Esophagus muscularis mucosa (tissue), 4 donors: ENCODE measurements at regions of chr12 and their contacts with region 1.

Region 1: DNA sequence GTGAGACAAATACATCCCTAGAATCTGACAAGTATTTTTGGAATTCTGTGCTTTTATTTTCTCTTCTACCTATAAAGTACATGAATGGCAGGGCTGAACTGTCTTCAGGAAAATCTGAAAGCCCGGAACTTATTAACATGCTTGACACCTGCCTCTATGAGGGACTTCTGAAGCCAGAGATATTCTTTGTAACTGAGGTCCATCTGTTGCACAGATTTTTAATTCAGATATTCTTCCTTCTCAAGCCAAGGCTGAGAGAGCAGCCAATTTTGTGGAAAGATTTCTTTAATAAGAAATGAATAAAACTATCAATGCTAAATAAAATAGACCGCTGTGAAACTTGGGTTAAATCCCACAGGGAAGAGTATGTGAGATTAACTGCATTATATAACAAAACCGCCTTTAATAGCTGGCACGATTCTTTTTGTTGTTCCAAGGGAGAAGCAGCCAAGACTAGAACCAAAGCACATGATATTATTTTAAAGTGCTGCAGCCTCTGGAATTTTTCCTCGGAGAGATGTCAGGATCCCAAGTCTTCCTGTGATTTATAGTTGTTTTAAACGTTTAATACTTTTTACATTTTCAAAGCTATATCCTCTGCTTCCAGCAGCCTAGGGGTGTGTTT is 148.9 kb downstream of the CRADD start:
- DNase-seq: no peak
- H3K4me3 ChIP-seq: peak overlapping the region in 3 of 4 donors; percentile 0 to 16 (median 11)
- H3K27ac ChIP-seq: peak overlapping the region; percentile 56 to 74 (median 68)
- H3K4me1 ChIP-seq: peaks cover 37 to 71% (median 51%) of the 10 kb centered on the region in 4 donors
- H3K27me3 ChIP-seq: no peaks in the 10 kb centered on the region
- CTCF ChIP-seq: no peak
- EP300 ChIP-seq: no peak
- POLR2A ChIP-seq: no peak

Region 2: GRCh38 chr12:93514853-93515252 is 311.2 kb before region 1 on chr12:
- intact Hi-C with region 1: no loop called
- DNase-seq: no peak
- H3K4me3 ChIP-seq: no peak overlapping the region
- H3K27ac ChIP-seq: no peak overlapping the region
- H3K4me1 ChIP-seq: peaks cover 0 to 5% (median 0%) of the 10 kb centered on the region in 4 donors
- H3K27me3 ChIP-seq: no peaks in the 10 kb centered on the region
- CTCF ChIP-seq: no peak
- EP300 ChIP-seq: no peak
- POLR2A ChIP-seq: no peak

Region 3: GRCh38 chr12:93778306-93778705 is 47.7 kb before region 1 on chr12:
- intact Hi-C with region 1: loop called (anchors 5 kb)
- DNase-seq: no peak
- H3K4me3 ChIP-seq: no peak overlapping the region
- H3K27ac ChIP-seq: peak overlapping the region; percentile 68 to 80 (median 78)
- H3K4me1 ChIP-seq: peaks cover 45 to 55% (median 51%) of the 10 kb centered on the region in 4 donors
- H3K27me3 ChIP-seq: no peaks in the 10 kb centered on the region
- CTCF ChIP-seq: no peak
- EP300 ChIP-seq: no peak
- POLR2A ChIP-seq: no peak

Region 4: GRCh38 chr12:93802698-93803423 is 23.2 kb before region 1 on chr12:
- intact Hi-C with region 1: no loop called
- DNase-seq: no peak
- H3K4me3 ChIP-seq: peak overlapping the region in 2 of 4 donors; percentile 5 to 7
- H3K27ac ChIP-seq: peak overlapping the region; percentile 75 to 80 (median 77)
- H3K4me1 ChIP-seq: peaks cover 20 to 43% (median 29%) of the 10 kb centered on the region in 4 donors
- H3K27me3 ChIP-seq: no peaks in the 10 kb centered on the region
- CTCF ChIP-seq: peak in 2 of 3 experiments; percentile 19
- EP300 ChIP-seq: no peak
- POLR2A ChIP-seq: no peak

Region 5: DNA sequence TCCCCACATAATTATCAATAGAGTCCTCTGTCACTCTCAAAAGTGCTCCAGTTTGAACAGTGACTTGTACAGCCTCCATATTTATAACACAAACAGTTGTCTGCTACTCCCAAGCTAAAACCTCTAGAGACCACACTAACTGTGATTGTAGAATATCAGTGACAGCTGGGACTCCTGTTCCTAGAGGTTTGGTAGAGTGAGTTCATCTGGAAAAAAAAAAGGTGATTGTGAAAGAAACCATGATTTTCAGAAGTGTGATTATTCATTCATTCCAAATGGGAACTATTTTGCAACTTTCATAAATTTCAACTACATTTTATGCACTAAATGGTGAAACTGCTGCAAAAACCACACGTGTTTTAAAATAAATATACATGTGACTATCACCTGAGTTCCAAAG is 194.3 kb after region 1 on chr12:
- intact Hi-C with region 1: no loop called
- DNase-seq: no peak
- H3K4me3 ChIP-seq: no peak overlapping the region
- H3K27ac ChIP-seq: no peak overlapping the region
- H3K4me1 ChIP-seq: no peaks in the 10 kb centered on the region
- H3K27me3 ChIP-seq: no peaks in the 10 kb centered on the region
- CTCF ChIP-seq: no peak
- EP300 ChIP-seq: no peak
- POLR2A ChIP-seq: no peak

Region 6: DNA sequence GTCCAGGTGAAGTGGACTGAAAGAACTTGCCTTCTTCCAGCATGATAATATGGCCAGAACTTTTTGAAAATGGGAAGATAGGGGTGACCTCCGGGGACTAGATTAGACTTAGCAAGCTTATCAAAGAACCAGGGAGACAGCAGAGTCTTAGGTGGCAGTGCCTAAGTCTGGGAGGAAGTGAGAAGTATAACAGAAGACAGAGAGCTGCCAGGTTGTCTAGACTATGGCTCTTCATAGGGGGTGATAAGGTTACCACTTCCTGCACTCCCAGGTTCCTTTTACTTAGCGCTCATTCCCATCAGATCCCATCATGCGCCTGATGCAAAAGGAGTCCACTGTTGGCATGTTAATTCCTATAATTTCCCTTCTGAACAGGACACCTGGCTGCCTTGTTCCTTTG is 392.2 kb after region 1 on chr12:
- intact Hi-C with region 1: no loop called
- DNase-seq: peak; percentile 24
- H3K4me3 ChIP-seq: no peak overlapping the region
- H3K27ac ChIP-seq: no peak overlapping the region
- H3K4me1 ChIP-seq: no peaks in the 10 kb centered on the region
- H3K27me3 ChIP-seq: no peaks in the 10 kb centered on the region
- CTCF ChIP-seq: no peak
- EP300 ChIP-seq: no peak
- POLR2A ChIP-seq: no peak